ENCODE measurements at regions of chr5 and their contacts with region 1.

Region 1: GRCh38 chr5:158785397-158785796 is 314.3 kb downstream of the EBF1 start:
- DNase-seq: no peak
- ATAC-seq: no peak
- H3K4me3 Mint-ChIP-seq: no peak overlapping the region
- H3K27ac Mint-ChIP-seq: no peak overlapping the region
- H3K4me1 Mint-ChIP-seq: peaks cover 47% of the 10 kb centered on the region
- H3K27me3 Mint-ChIP-seq: no peaks in the 10 kb centered on the region
- CTCF ChIP-seq: no peak

Region 2: DNA sequence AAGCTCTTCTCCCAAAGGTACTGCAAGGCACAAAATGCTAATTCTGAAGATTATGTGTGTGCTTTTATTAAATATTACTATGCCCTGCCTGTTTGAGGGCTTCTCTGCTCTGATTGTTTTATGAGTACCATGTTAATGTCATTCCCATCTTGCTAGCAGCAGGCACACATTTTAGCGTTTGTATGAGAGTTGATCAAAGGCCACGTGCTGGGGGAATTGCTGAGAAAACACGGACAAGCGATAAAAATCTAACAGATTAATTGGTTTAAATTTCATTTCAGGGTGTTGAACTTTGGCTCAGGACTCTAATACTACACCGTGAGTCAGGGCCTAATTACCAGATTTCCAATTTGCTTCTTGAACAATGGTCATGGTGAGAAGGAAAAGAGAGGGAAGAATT is 15.9 kb after region 1 on chr5:
- CTCF ChIA-PET with region 1: no interaction called
- POLR2A ChIA-PET with region 1: no interaction called
- intact Hi-C with region 1: loop called (anchors 2 kb)
- DNase-seq: no peak
- ATAC-seq: no peak
- H3K4me3 Mint-ChIP-seq: no peak overlapping the region
- H3K27ac Mint-ChIP-seq: no peak overlapping the region
- H3K4me1 Mint-ChIP-seq: peaks cover 41% of the 10 kb centered on the region
- H3K27me3 Mint-ChIP-seq: no peaks in the 10 kb centered on the region
- CTCF ChIP-seq: no peak